Right ventricle myocardium superior (tissue), 1 donor: ENCODE measurements at regions of chr9 and their contacts with region 1.

Region 1: GRCh38 chr9:107340920-107341632 is 58.0 kb downstream of the RAD23B start:
- DNase-seq: peak; percentile 87
- ATAC-seq: peak; percentile 66

Region 2: GRCh38 chr9:107016383-107016782 is 324.7 kb before region 1 on chr9:
- intact Hi-C with region 1: no loop called
- DNase-seq: no peak
- ATAC-seq: no peak

Region 3: GRCh38 chr9:107243751-107244150 is 97.3 kb before region 1 on chr9:
- intact Hi-C with region 1: loop called (anchors 10 kb)
- DNase-seq: no peak
- ATAC-seq: no peak